ENCODE measurements at regions of chr20 and their contacts with region 1.

Region 1: GRCh38 chr20:4607287-4607713 is 114.4 kb upstream of the PRND start:
- DNase-seq: peak; percentile 93
- H3K4me3 ChIP-seq: no peak overlapping the region
- H3K27ac ChIP-seq: no peak overlapping the region
- H3K4me1 ChIP-seq: peaks cover 0 to 14% (median 6%) of the 10 kb centered on the region in 4 donors
- H3K27me3 ChIP-seq: peaks cover 0 to 3% (median 0%) of the 10 kb centered on the region in 4 donors
- CTCF ChIP-seq: peak; percentile 91 to 95 (median 95)
- EP300 ChIP-seq: no peak
- POLR2A ChIP-seq: no peak

Region 2: GRCh38 chr20:4720041-4720976 is 113.0 kb after region 1 on chr20:
- intact Hi-C with region 1: loop called (anchors 1 kb)
- DNase-seq: peak; percentile 93
- H3K4me3 ChIP-seq: no peak overlapping the region
- H3K27ac ChIP-seq: peak overlapping the region; percentile 38 to 70 (median 52)
- H3K4me1 ChIP-seq: peaks cover 13% of the 10 kb centered on the region in 4 donors
- H3K27me3 ChIP-seq: peaks cover 0 to 4% (median 0%) of the 10 kb centered on the region in 4 donors
- CTCF ChIP-seq: peak; percentile 65 to 74 (median 73)
- EP300 ChIP-seq: no peak
- POLR2A ChIP-seq: no peak

Region 3: DNA sequence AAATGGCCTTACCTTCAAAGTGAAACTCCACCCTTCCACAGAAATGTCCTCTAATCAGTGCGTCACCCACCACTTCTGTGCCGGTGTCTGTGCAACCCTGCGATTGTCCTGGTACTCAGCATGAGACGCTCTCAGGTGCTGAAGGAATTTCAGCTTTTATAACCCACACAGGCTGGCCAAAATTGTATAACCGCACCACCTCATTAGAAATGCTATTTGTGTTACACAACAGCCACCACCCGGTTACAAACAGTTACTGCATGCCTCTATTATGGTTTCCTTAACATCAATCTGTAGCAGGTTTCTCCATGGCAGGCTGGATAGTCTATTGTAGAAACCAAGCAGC is 342.5 kb after region 1 on chr20:
- intact Hi-C with region 1: loop called (anchors 10 kb)
- DNase-seq: no peak
- H3K4me3 ChIP-seq: no peak overlapping the region
- H3K27ac ChIP-seq: peak overlapping the region; percentile 4 to 70 (median 62)
- H3K4me1 ChIP-seq: peaks cover 3 to 48% (median 47%) of the 10 kb centered on the region in 4 donors
- H3K27me3 ChIP-seq: no peaks in the 10 kb centered on the region
- CTCF ChIP-seq: peak; percentile 46 to 78 (median 74)
- EP300 ChIP-seq: no peak
- POLR2A ChIP-seq: no peak